ENCODE measurements at regions of chr17 and their contacts with region 1.

Region 1: DNA sequence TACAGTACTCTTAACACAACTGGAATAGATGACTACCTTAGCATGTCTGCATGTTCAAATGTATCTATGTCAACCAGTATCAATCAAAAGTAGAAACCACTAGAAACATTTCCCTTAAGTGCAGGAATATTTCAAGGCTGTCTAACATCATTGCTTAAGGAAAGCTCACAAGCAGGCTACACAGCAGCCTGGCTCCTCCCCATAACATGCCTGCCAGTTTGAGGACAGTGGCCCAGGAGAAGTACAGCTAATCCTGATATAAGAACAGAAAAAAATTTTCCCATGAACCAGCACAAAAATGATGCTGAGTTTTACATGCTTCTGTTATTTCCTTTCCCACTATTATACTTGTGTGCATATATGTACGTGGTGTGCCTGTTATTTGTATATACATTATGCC is 175.1 kb downstream of the MYO1D start:
- DNase-seq: no peak
- H3K4me3 ChIP-seq: no peak overlapping the region
- H3K27ac ChIP-seq: no peak overlapping the region
- H3K4me1 ChIP-seq: no peaks in the 10 kb centered on the region
- H3K27me3 ChIP-seq: no peaks in the 10 kb centered on the region
- CTCF ChIP-seq: no peak

Region 2: DNA sequence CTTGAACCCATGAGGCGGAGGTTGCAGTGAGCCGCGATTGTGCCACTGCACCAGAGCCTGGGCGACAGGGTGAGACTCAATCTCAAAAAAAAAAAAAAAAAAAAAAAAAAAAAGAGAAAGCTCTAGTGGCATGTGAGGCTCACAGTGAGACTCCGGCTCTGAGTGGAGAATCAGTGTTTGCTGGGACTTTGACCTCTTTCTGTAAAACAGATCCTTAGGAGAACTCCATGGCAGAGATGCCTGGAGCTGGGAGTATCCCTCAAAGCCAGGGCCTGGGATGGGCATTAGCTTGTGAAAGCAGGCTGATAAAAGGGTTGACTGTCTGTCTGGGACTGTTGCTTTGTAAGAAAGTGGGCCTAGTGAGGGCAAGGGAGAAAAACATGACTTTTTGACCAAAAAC is 305.5 kb before region 1 on chr17:
- CTCF ChIA-PET with region 1: no interaction called
- POLR2A ChIA-PET with region 1: no interaction called
- intact Hi-C with region 1: no loop called
- DNase-seq: no peak
- H3K4me3 ChIP-seq: no peak overlapping the region
- H3K27ac ChIP-seq: no peak overlapping the region
- H3K4me1 ChIP-seq: no peaks in the 10 kb centered on the region
- H3K27me3 ChIP-seq: no peaks in the 10 kb centered on the region
- CTCF ChIP-seq: no peak

Region 3: GRCh38 chr17:32648450-32648849 is 53.4 kb before region 1 on chr17:
- CTCF ChIA-PET with region 1: no interaction called
- POLR2A ChIA-PET with region 1: no interaction called
- intact Hi-C with region 1: loop called (anchors 10 kb)
- DNase-seq: no peak
- H3K4me3 ChIP-seq: no peak overlapping the region
- H3K27ac ChIP-seq: no peak overlapping the region
- H3K4me1 ChIP-seq: no peaks in the 10 kb centered on the region
- H3K27me3 ChIP-seq: no peaks in the 10 kb centered on the region
- CTCF ChIP-seq: no peak

Region 4: DNA sequence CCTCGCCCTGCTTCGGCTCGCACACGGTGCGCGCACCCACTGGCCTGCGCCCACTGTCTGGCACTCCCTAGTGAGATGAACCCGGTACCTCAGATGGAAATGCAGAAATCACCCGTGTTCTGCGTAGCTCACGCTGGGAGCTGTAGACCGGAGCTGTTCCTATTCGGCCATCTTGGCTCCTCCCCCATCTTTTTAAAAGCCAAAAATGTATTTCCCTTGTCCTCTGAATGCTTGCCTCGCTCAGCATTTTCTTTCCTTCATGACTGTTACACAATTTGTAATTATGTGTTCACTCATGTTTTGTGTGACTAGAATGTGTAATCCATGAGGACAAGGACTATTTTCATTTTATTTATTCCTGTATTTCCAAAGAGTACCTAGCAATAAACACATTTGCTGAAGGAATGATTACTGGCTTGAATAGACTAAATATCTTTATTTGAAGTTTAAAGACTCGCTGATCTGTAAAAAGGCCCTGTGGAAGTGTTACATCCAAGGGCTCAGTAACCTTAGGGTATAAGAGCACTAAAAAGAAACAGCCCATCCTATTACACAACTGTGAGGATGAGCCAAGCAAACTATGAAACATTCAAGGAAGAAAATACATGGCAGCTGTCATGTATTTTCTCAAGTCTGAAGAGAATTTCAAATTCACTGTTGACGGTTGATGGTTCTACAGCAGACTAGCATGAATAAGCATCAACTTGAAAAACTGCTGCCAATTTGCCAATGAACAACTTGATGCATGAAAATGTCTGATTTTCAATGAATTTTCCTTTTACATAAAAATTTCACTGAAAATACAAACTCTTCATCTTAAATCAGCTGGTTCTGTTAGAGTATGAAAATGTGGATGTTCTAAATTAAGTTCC is 17.5 kb before region 1 on chr17:
- CTCF ChIA-PET with region 1: no interaction called
- POLR2A ChIA-PET with region 1: no interaction called
- intact Hi-C with region 1: no loop called
- DNase-seq: no peak
- H3K4me3 ChIP-seq: no peak overlapping the region
- H3K27ac ChIP-seq: no peak overlapping the region
- H3K4me1 ChIP-seq: no peaks in the 10 kb centered on the region
- H3K27me3 ChIP-seq: no peaks in the 10 kb centered on the region
- CTCF ChIP-seq: no peak

Measured in A673 (cell line).